Right ventricle myocardium inferior (tissue), 1 donor: ENCODE measurements at regions of chr1 and their contacts with region 1.

Region 1: GRCh38 chr1:175154629-175155472 is 37.7 kb downstream of the KIAA0040 start:
- DNase-seq: peak; percentile 79
- ATAC-seq: peak; percentile 65

Region 2: GRCh38 chr1:175192630-175193526 is 38.0 kb after region 1 on chr1 and contains the start of gene KIAA0040:
- intact Hi-C with region 1: loop called (anchors 2 kb)
- DNase-seq: peak; percentile 90
- ATAC-seq: peak; percentile 91
- total RNA-seq, gene KIAA0040: 22.8 TPM

Region 3: GRCh38 chr1:175221666-175222175 is 66.9 kb after region 1 on chr1:
- intact Hi-C with region 1: loop called (anchors 2 kb)
- DNase-seq: no peak
- ATAC-seq: peak; percentile 48

Region 4: GRCh38 chr1:175319418-175320230 is 164.8 kb after region 1 on chr1:
- intact Hi-C with region 1: loop called (anchors 1 kb)
- DNase-seq: peak; percentile 87
- ATAC-seq: peak; percentile 81

Region 5: GRCh38 chr1:175481126-175482066 is 326.5 kb after region 1 on chr1:
- intact Hi-C with region 1: loop called (anchors 5 kb)
- DNase-seq: no peak
- ATAC-seq: no peak

Region 6: GRCh38 chr1:176073524-176074157 is 918.8 kb after region 1 on chr1:
- intact Hi-C with region 1: loop called (anchors 5 kb)
- DNase-seq: no peak
- ATAC-seq: peak; percentile 54